Colonic mucosa (tissue), 4 donors: ENCODE measurements at regions of chr1 and their contacts with region 1.

Region 1: GRCh38 chr1:63691701-63692425 is 82.0 kb upstream of the ROR1 start:
- DNase-seq: peak; percentile 82
- H3K4me3 ChIP-seq: no peak overlapping the region
- H3K27ac ChIP-seq: peak overlapping the region; percentile 7
- H3K4me1 ChIP-seq: no peaks in the 10 kb centered on the region
- H3K27me3 ChIP-seq: no peaks in the 10 kb centered on the region
- CTCF ChIP-seq: peak; percentile 71

Region 2: GRCh38 chr1:63611231-63611630 is 80.6 kb before region 1 on chr1:
- intact Hi-C with region 1: no loop called
- DNase-seq: no peak
- H3K4me3 ChIP-seq: no peak overlapping the region
- H3K27ac ChIP-seq: no peak overlapping the region
- H3K4me1 ChIP-seq: no peaks in the 10 kb centered on the region
- H3K27me3 ChIP-seq: no peaks in the 10 kb centered on the region
- CTCF ChIP-seq: no peak

Region 3: DNA sequence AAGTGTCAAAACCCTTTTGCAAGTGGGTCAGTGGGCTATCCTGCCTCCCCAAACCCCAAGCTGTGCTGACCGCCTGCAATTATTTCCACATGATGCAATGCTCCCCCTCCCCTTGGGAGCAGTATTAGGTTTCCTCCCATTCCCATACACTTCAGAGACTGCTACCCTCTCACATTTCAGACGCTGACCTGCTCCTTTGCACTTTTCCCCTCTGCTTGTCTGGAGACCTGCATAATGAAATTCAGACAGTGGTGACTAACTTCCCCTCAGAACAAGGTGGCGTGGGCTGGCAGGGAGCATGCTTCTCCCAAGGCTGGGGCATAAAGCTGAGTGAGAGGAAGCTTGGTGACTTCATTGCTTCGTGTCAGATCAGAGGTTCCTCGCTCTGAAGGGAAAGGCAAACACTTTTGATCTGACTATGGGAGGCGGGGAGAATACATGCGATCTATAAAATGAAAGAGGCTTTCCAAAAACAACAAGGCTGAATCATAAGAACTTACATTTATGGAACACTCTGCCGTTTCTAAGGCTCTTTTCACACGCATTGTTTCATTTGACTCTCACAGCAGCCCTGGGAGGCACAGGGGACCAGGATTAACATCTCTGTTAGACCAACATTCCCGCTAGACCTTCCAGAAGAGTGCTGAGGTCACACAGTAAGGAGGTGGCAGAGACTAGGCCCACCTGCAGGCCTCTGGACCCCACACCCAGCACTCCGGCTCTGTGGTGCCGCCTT is 54.4 kb after region 1 on chr1:
- intact Hi-C with region 1: no loop called
- DNase-seq: no peak
- H3K4me3 ChIP-seq: no peak overlapping the region
- H3K27ac ChIP-seq: no peak overlapping the region
- H3K4me1 ChIP-seq: no peaks in the 10 kb centered on the region
- H3K27me3 ChIP-seq: no peaks in the 10 kb centered on the region
- CTCF ChIP-seq: no peak

Region 4: DNA sequence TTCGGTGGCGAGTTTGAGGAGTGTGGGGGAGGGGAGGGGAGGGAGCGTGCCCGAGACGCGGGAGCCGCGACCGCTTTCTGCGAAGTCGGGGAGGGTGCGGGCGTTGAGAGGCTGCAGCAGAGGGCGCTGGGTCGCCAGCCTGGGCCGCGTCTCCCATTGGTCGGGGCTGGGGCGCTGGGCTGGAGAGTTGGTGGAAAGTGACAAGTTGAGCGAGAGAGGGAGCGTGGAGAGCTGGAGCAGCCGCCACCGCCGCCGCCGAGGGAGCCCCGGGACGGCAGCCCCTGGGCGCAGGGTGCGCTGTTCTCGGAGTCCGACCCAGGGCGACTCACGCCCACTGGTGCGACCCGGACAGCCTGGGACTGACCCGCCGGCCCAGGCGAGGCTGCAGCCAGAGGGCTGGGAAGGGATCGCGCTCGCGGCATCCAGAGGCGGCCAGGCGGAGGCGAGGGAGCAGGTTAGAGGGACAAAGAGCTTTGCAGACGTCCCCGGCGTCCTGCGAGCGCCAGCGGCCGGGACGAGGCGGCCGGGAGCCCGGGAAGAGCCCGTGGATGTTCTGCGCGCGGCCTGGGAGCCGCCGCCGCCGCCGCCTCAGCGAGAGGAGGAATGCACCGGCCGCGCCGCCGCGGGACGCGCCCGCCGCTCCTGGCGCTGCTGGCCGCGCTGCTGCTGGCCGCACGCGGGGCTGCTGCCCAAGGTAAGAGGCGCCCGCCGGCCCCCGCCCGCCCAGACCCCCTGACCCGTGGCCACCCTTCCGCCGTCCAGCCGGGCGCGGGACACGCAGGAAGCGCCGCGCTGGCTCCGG is 82.2 kb after region 1 on chr1 and contains the start of gene ROR1:
- intact Hi-C with region 1: loop called (anchors 10 kb)
- DNase-seq: peak; percentile 92
- H3K4me3 ChIP-seq: peak within 1 kb of the TSS; percentile 70
- H3K27ac ChIP-seq: peak within 1 kb of the TSS; percentile 67
- H3K4me1 ChIP-seq: no peaks in the 10 kb centered on the region
- H3K27me3 ChIP-seq: no peaks in the 10 kb centered on the region
- CTCF ChIP-seq: peak; percentile 44
- total RNA-seq, gene ROR1: 5.1 to 6.8 TPM

Region 5: GRCh38 chr1:63917571-63918417 is 225.9 kb after region 1 on chr1:
- intact Hi-C with region 1: loop called (anchors 10 kb)
- DNase-seq: no peak
- H3K4me3 ChIP-seq: no peak overlapping the region
- H3K27ac ChIP-seq: no peak overlapping the region
- H3K4me1 ChIP-seq: no peaks in the 10 kb centered on the region
- H3K27me3 ChIP-seq: no peaks in the 10 kb centered on the region
- CTCF ChIP-seq: no peak